Activated CD4-positive, alpha-beta T cell treated with anti-CD3 and anti-CD28 coated beads, Interleukin-2, amount 10 ng/mL, durations not matched to agents 24 days and 14 days (primary cell): ENCODE measurements at regions of chr22 and their contacts with region 1.

Region 1: GRCh38 chr22:42614312-42615091 is at the start of gene POLDIP3:
- DNase-seq: peak; percentile 99
- H3K4me3 Mint-ChIP-seq: peak within 1 kb of the TSS; percentile 91
- H3K27ac Mint-ChIP-seq: peak within 1 kb of the TSS; percentile 99
- H3K4me1 Mint-ChIP-seq: peaks cover 47% of the 10 kb centered on the region
- H3K27me3 Mint-ChIP-seq: no peaks in the 10 kb centered on the region
- total RNA-seq, gene POLDIP3: 75.4 and 85.3 TPM in 2 replicates

Region 2: GRCh38 chr22:42553475-42554361 is 60.8 kb before region 1 on chr22 and contains the start of gene SERHL2:
- intact Hi-C with region 1: loop called (anchors 5 kb)
- DNase-seq: peak; percentile 97
- H3K4me3 Mint-ChIP-seq: peak within 1 kb of the TSS; percentile 88
- H3K27ac Mint-ChIP-seq: peak within 1 kb of the TSS; percentile 84
- H3K4me1 Mint-ChIP-seq: peaks cover 12% of the 10 kb centered on the region
- H3K27me3 Mint-ChIP-seq: no peaks in the 10 kb centered on the region
- total RNA-seq, gene SERHL2: 2.2 and 2.3 TPM in 2 replicates

Region 3: GRCh38 chr22:42581762-42582716 is 32.5 kb before region 1 on chr22:
- intact Hi-C with region 1: loop called (anchors 2 kb)
- DNase-seq: peak; percentile 95
- H3K4me3 Mint-ChIP-seq: peak overlapping the region; percentile 98
- H3K27ac Mint-ChIP-seq: peak overlapping the region; percentile 87
- H3K4me1 Mint-ChIP-seq: peaks cover 14% of the 10 kb centered on the region
- H3K27me3 Mint-ChIP-seq: no peaks in the 10 kb centered on the region

Region 4: GRCh38 chr22:42649246-42650099 is 35.0 kb after region 1 on chr22 and contains the start of gene CYB5R3:
- intact Hi-C with region 1: loop called (anchors 1 kb)
- DNase-seq: peak; percentile 92
- H3K4me3 Mint-ChIP-seq: peak within 1 kb of the TSS; percentile 95
- H3K27ac Mint-ChIP-seq: peak within 1 kb of the TSS; percentile 97
- H3K4me1 Mint-ChIP-seq: peaks cover 11% of the 10 kb centered on the region
- H3K27me3 Mint-ChIP-seq: peaks cover 4% of the 10 kb centered on the region
- total RNA-seq, gene CYB5R3: 76.2 and 77.0 TPM in 2 replicates

Region 5: GRCh38 chr22:43142880-43143562 is 528.5 kb after region 1 on chr22 and contains the start of gene MCAT:
- intact Hi-C with region 1: loop called (anchors 5 kb)
- DNase-seq: peak; percentile 97
- H3K4me3 Mint-ChIP-seq: peak within 1 kb of the TSS; percentile 90
- H3K27ac Mint-ChIP-seq: peak within 1 kb of the TSS; percentile 95
- H3K4me1 Mint-ChIP-seq: peaks cover 24% of the 10 kb centered on the region
- H3K27me3 Mint-ChIP-seq: no peaks in the 10 kb centered on the region
- total RNA-seq, gene MCAT: 20.9 and 24.3 TPM in 2 replicates